ENCODE measurements at regions of chr13 and their contacts with region 1.

Region 1: DNA sequence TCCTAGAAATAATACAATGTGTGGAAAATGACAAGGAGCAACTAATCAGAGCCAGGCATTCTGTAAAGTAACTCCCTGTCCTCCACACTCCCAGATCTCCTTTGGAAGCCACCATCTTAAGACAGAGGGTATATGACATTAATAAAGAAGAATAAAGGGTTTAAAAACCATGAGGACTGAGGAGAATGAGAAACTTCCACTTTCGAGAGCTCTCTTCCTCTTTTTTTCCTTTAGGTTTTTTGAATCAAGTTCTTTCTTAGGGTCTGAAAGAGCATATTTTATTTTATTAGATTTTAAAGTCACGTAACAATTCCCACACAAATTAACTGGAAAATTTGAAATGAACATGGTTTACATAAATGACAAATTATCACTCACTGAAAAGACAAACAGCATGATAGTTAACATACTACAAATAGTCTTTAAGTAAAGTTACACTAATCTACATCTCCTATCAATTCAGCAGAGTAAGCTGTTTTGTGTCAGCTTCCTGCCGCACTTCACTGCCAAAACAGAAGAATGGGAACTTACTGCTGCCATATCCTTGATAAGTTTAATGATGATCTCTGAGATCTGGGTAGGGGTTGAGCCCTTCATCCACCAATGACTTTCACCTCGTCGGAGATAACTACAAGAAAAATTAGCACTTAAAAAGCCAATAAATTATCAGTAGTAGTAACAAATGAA is 38.6 kb upstream of the FBXL3 start:
- DNase-seq: no peak
- ATAC-seq: no peak
- H3K4me3 ChIP-seq: no peak overlapping the region
- H3K4me3 Mint-ChIP-seq: no peak overlapping the region
- H3K27ac ChIP-seq: no peak overlapping the region
- H3K27ac Mint-ChIP-seq: peak overlapping the region in 5 of 9 donors; percentile 23 to 80 (median 74)
- H3K4me1 ChIP-seq: no peaks in the 10 kb centered on the region
- H3K4me1 Mint-ChIP-seq: peaks cover 0 to 2% (median 0%) of the 10 kb centered on the region in 7 donors
- H3K27me3 ChIP-seq: no peaks in the 10 kb centered on the region
- H3K27me3 Mint-ChIP-seq: no peaks in the 10 kb centered on the region

Region 2: GRCh38 chr13:76921516-76921915 is 144.1 kb before region 1 on chr13:
- CTCF ChIA-PET with region 1: no interaction called
- POLR2A ChIA-PET with region 1: no interaction called
- intact Hi-C with region 1: loop called in 1 of 2 experiments (anchors 5 kb)
- DNase-seq: no peak
- ATAC-seq: no peak
- H3K4me3 ChIP-seq: no peak overlapping the region
- H3K4me3 Mint-ChIP-seq: no peak overlapping the region
- H3K27ac ChIP-seq: no peak overlapping the region
- H3K27ac Mint-ChIP-seq: no peak overlapping the region
- H3K4me1 ChIP-seq: no peaks in the 10 kb centered on the region
- H3K4me1 Mint-ChIP-seq: no peaks in the 10 kb centered on the region
- H3K27me3 ChIP-seq: no peaks in the 10 kb centered on the region
- H3K27me3 Mint-ChIP-seq: peaks cover 7 to 25% (median 19%) of the 10 kb centered on the region in 5 donors

Region 3: DNA sequence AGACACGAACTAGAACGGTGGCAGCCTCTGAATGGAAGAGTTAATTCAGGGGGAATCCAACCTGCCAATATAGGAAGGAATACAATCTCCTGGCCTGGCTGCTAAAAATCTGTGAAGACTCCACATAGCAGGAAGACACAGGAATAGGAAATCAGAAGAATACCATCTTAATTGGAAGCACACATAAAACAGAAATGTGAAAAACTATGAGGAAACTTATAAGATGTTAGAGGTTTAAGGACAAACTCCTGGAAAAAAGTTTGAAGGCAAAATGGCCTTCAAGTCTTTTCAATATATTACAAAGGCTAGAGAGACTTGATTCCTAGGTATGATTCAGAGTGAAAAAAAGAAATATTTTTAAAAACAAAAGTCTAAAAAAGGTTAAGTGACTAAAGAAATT is 39.4 kb after region 1 on chr13:
- CTCF ChIA-PET with region 1: no interaction called
- POLR2A ChIA-PET with region 1: no interaction called
- intact Hi-C with region 1: loop called in 1 of 2 experiments (anchors 5 kb)
- DNase-seq: no peak
- ATAC-seq: no peak
- H3K4me3 ChIP-seq: no peak overlapping the region
- H3K4me3 Mint-ChIP-seq: no peak overlapping the region
- H3K27ac ChIP-seq: no peak overlapping the region
- H3K27ac Mint-ChIP-seq: peak overlapping the region in 2 of 9 donors; percentile 33 to 36
- H3K4me1 ChIP-seq: no peaks in the 10 kb centered on the region
- H3K4me1 Mint-ChIP-seq: peaks cover 0 to 6% (median 0%) of the 10 kb centered on the region in 7 donors
- H3K27me3 ChIP-seq: no peaks in the 10 kb centered on the region
- H3K27me3 Mint-ChIP-seq: no peaks in the 10 kb centered on the region